T-cell (primary cell): ENCODE measurements at regions of chr1 and their contacts with region 1.

Region 1: GRCh38 chr1:203713125-203713524 is 51.9 kb upstream of the LAX1 start:
- DNase-seq: no peak
- ATAC-seq: no peak
- H3K4me3 ChIP-seq: no peak overlapping the region
- H3K4me3 Mint-ChIP-seq: no peak overlapping the region
- H3K27ac ChIP-seq: no peak overlapping the region
- H3K27ac Mint-ChIP-seq: peak overlapping the region in 1 of 2 donors; percentile 10
- H3K4me1 ChIP-seq: no peaks in the 10 kb centered on the region
- H3K4me1 Mint-ChIP-seq: no peaks in the 10 kb centered on the region
- H3K27me3 ChIP-seq: no peaks in the 10 kb centered on the region
- H3K27me3 Mint-ChIP-seq: no peaks in the 10 kb centered on the region

Region 2: GRCh38 chr1:203517426-203518110 is 195.6 kb before region 1 on chr1:
- CTCF ChIA-PET with region 1: no interaction called
- POLR2A ChIA-PET with region 1: no interaction called
- DNase-seq: no peak
- ATAC-seq: no peak
- H3K4me3 ChIP-seq: no peak overlapping the region
- H3K4me3 Mint-ChIP-seq: no peak overlapping the region
- H3K27ac ChIP-seq: no peak overlapping the region
- H3K27ac Mint-ChIP-seq: no peak overlapping the region
- H3K4me1 ChIP-seq: peaks cover 17 to 31% of the 10 kb centered on the region in 2 experiments
- H3K4me1 Mint-ChIP-seq: peaks cover 22 to 39% (median 24%) of the 10 kb centered on the region in 3 donors
- H3K27me3 ChIP-seq: peaks cover 0 to 33% of the 10 kb centered on the region in 2 experiments
- H3K27me3 Mint-ChIP-seq: peaks cover 0 to 10% of the 10 kb centered on the region in 2 donors

Region 3: GRCh38 chr1:203733009-203733863 is 20.1 kb after region 1 on chr1:
- CTCF ChIA-PET with region 1: no interaction called
- POLR2A ChIA-PET with region 1: no interaction called
- DNase-seq: no peak
- ATAC-seq: no peak
- H3K4me3 ChIP-seq: no peak overlapping the region
- H3K4me3 Mint-ChIP-seq: no peak overlapping the region
- H3K27ac ChIP-seq: no peak overlapping the region
- H3K27ac Mint-ChIP-seq: peak overlapping the region; percentile 49 to 50
- H3K4me1 ChIP-seq: no peaks in the 10 kb centered on the region
- H3K4me1 Mint-ChIP-seq: peaks cover 0 to 2% (median 0%) of the 10 kb centered on the region in 3 donors
- H3K27me3 ChIP-seq: no peaks in the 10 kb centered on the region
- H3K27me3 Mint-ChIP-seq: no peaks in the 10 kb centered on the region

Region 4: DNA sequence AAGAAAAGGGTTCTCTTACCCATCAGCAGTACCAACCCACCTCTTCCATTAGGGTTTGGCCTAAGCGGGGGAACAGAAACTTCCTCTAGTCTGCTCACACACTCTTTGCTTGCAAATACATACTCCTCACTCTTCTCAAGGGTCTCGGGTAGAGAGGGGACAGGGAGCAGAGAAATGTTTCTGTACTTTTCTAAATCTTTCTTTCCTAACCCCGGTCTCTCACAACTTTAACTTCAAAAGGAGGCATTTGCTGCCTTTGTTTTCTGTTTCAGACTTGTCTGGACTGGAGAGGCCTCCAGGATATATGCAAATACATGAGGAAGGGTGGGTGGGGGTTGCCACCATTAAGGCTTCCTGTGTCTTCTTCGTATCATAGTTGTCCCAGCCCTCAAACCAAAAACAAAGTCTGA is 41.3 kb after region 1 on chr1:
- CTCF ChIA-PET with region 1: no interaction called
- POLR2A ChIA-PET with region 1: interaction called in 1 of 2 experiments, 10 read pairs
- DNase-seq: peak in 8 of 35 experiments; percentile 17 to 49 (median 26)
- ATAC-seq: peak; percentile 72 to 86 (median 80)
- H3K4me3 ChIP-seq: no peak overlapping the region
- H3K4me3 Mint-ChIP-seq: peak overlapping the region; percentile 38 to 55 (median 49)
- H3K27ac ChIP-seq: peak overlapping the region; percentile 36
- H3K27ac Mint-ChIP-seq: peak overlapping the region; percentile 94 to 95
- H3K4me1 ChIP-seq: peaks cover 6 to 32% of the 10 kb centered on the region in 2 experiments
- H3K4me1 Mint-ChIP-seq: peaks cover 31 to 37% (median 33%) of the 10 kb centered on the region in 3 donors
- H3K27me3 ChIP-seq: no peaks in the 10 kb centered on the region
- H3K27me3 Mint-ChIP-seq: no peaks in the 10 kb centered on the region